ENCODE measurements at regions of chr9 and their contacts with region 1.

Region 1: GRCh38 chr9:95031711-95032461 is 285.6 kb downstream of the FANCC start:
- DNase-seq: no peak
- H3K4me3 ChIP-seq: no peak overlapping the region
- H3K27ac ChIP-seq: peak overlapping the region; percentile 47 to 100
- H3K4me1 ChIP-seq: peaks cover 11 to 32% of the 10 kb centered on the region in 2 donors
- H3K27me3 ChIP-seq: no peaks in the 10 kb centered on the region
- CTCF ChIP-seq: no peak
- POLR2A ChIP-seq: no peak

Region 2: DNA sequence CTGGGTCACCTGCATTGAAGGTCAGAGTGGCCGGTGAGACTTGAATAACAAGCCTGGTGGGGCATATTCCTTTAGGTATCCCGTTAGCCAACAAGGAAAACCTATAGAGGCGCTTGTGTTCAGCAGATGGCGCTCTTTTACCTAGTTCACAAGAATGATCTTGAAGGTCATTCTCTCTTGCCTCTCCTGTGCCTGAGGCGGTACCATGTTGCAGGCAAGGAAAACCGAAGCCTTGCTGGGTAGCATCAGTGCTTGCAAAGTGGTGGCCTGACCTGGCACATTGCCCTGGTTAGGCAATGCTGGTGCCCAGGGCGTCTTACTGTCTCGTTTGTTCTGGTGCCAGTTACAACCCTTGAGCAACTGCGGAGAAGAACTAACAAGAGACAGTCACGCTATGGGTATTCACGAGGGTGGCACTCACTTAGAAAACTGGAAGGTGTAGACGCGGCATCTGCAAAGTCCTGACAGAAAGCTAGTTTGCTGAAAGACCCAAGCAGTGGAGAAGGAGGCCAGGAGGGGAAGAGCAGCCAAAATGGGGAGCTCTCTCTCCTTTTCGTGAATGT is 248.7 kb before region 1 on chr9:
- intact Hi-C with region 1: no loop called
- DNase-seq: peak; percentile 68 to 87
- H3K4me3 ChIP-seq: no peak overlapping the region
- H3K27ac ChIP-seq: peak overlapping the region; percentile 51 to 64
- H3K4me1 ChIP-seq: no peaks in the 10 kb centered on the region
- H3K27me3 ChIP-seq: no peaks in the 10 kb centered on the region
- CTCF ChIP-seq: peak; percentile 73 to 80 (median 76)
- POLR2A ChIP-seq: no peak

Region 3: DNA sequence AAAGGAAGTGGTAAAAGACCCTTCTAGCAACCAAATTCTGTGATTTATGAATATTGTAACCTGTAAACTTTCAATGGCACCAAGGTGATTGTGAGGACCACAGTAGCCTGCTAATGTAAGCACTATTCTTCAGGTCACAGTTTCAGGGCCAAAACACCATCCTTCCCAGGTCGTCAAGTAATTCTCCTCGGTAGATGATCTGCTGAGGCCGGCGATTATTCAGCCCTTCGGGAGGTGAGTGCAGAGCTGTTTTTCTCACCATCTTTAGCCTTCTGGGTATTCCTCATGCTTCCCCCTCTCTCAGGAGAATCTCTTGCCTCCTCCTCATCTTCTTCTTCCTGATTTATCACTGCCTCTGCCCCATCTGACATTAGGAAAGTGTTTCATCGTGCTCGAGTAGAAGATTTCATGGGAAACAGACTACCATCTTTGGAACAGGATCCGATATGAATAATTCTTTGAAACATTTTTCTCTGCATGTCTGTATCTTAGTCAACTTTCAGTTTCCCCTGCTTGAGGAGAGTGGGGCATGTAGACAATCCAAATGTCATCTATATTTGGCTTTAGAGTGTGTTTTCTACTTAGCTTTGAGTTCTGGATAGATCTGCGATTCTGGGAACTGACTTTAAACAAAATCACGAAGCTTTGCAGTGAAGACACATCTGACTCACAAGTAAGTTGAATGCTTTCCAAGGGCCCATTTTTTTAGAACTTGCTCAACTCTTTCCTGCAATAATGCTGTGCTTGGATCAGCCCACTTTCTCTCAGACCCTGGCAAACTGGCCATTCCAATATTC is 131.5 kb before region 1 on chr9:
- intact Hi-C with region 1: no loop called
- DNase-seq: peak in 1 of 2 donors; percentile 81
- H3K4me3 ChIP-seq: peak overlapping the region; percentile 16 to 25
- H3K27ac ChIP-seq: peak overlapping the region; percentile 85
- H3K4me1 ChIP-seq: peaks cover 0 to 16% of the 10 kb centered on the region in 2 donors
- H3K27me3 ChIP-seq: no peaks in the 10 kb centered on the region
- CTCF ChIP-seq: no peak
- POLR2A ChIP-seq: no peak

Region 4: DNA sequence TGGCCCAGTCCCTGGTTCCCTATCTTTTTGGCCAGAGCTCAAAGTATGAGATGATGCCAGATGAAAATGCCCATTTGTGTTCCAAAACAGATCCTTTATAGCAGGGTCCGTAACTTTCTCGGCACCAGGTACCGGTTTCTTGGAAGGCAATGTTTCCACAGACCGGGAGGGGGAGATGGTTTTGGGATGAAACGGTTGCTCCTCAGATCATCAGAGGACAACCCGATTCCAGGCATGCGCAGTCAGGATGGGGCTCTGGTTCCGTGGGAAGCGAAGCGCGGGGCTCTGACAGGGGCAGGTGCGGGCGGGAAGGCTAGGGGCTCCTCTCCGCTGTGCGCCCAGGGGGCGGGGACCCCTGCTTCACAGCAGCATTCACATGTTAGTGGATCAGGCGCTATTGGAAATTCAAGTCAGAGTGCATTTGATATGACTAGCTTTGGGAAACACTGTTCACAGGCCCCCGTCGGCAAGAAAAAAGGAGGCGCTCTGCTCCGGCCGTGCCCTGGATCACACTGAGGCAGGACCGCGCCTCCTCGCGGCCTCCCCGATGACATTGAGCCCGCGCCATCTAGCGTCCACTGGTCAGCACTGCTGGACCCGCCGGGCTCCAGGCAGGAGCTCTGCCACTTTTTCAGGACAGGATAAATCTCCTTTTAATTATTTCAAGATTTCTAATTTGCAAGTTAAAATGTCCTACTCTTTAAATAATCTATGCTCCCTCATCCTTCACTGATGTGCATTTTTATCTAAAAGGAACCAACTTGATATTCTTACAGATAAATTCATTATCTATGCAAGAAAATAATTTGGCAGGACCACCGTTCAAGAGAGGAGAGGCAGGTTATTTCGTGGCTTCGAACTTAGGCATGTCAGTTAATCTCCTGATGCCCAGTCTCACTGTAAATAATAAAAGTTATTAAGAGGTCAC is 95.6 kb after region 1 on chr9:
- intact Hi-C with region 1: loop called (anchors 10 kb)
- DNase-seq: peak; percentile 88
- H3K4me3 ChIP-seq: peak overlapping the region; percentile 33 to 34
- H3K27ac ChIP-seq: peak overlapping the region; percentile 60 to 72
- H3K4me1 ChIP-seq: peaks cover 0 to 5% of the 10 kb centered on the region in 2 donors
- H3K27me3 ChIP-seq: no peaks in the 10 kb centered on the region
- CTCF ChIP-seq: peak; percentile 95 to 99 (median 98)
- POLR2A ChIP-seq: peak in 1 of 2 donors; percentile 31